ENCODE measurements at regions of chr16 and their contacts with region 1.

Region 1: GRCh38 chr16:2720719-2721633 is 952 bp upstream of the PRSS27 start:
- DNase-seq: peak; percentile 74 to 91 (median 85)
- ATAC-seq: peak; percentile 95
- H3K4me3 ChIP-seq: peak overlapping the region; percentile 37
- H3K4me3 Mint-ChIP-seq: peak overlapping the region; percentile 55 to 82 (median 76)
- H3K27ac ChIP-seq: peak overlapping the region; percentile 74
- H3K27ac Mint-ChIP-seq: peak overlapping the region in 7 of 9 donors; percentile 38 to 90 (median 64)
- H3K4me1 ChIP-seq: no peaks in the 10 kb centered on the region
- H3K4me1 Mint-ChIP-seq: peaks cover 0 to 5% (median 0%) of the 10 kb centered on the region in 7 donors
- H3K27me3 ChIP-seq: no peaks in the 10 kb centered on the region
- H3K27me3 Mint-ChIP-seq: peaks cover 9 to 14% (median 10%) of the 10 kb centered on the region in 5 donors

Region 2: DNA sequence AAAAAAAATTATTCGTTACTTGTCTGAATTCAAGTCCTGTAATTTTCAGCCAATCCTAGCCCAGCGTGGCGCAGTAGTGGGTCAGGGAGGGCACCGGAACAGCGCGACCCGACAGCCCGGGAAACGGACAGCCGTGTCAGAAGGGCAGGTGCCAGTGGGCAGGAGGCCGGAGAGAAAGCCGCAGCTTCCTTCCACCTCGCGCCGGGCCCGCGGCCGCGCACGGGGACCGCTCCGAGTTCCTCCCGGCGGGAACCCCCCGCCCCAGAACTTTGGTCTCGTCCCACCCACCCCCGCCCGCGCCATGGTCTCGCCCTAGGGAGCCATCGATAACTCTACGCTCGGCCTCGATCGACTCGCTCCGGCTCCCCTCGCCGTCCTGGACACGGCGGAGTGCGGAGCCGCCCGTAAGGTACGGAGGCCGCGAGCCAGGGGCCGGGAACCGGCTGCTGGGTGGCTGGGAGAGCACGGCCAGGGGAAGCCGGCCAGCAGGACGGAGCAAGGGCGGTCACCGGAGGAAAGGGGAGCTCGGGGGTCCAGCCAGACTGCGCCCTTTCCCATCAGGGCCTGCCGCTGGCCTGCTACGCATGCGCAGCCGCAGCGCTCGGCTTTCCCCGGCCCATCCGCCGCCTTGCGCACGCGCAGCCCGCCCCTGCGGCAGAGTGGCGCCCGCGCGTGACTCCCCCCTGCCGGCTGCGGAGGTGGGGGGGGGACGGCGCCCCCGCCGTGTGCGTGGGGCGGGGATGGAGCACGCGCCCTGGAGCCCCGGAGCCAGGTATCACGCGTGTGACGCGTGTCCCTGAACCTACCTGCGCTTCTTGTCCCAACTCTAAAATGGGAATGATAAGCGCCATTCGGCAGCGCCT is 515.6 kb before region 1 on chr16 and contains the start of gene MLST8:
- CTCF ChIA-PET with region 1: no interaction called
- POLR2A ChIA-PET with region 1: no interaction called
- intact Hi-C with region 1: loop called in 1 of 2 experiments (anchors 2 kb)
- DNase-seq: peak; percentile 88 to 100 (median 98)
- ATAC-seq: peak; percentile 97
- H3K4me3 ChIP-seq: peak within 1 kb of the TSS; percentile 93
- H3K4me3 Mint-ChIP-seq: peak within 1 kb of the TSS; percentile 80 to 95 (median 88)
- H3K27ac ChIP-seq: peak within 1 kb of the TSS; percentile 97
- H3K27ac Mint-ChIP-seq: peak within 1 kb of the TSS; percentile 70 to 91 (median 86)
- H3K4me1 ChIP-seq: peaks cover 11 to 13% of the 10 kb centered on the region in 2 donors
- H3K4me1 Mint-ChIP-seq: peaks cover 7 to 29% (median 21%) of the 10 kb centered on the region in 7 donors
- H3K27me3 ChIP-seq: no peaks in the 10 kb centered on the region
- H3K27me3 Mint-ChIP-seq: peaks cover 0 to 11% (median 0%) of the 10 kb centered on the region in 5 donors
- total RNA-seq, gene MLST8: 25.1 to 41.2 (median 35.5) TPM

Region 3: DNA sequence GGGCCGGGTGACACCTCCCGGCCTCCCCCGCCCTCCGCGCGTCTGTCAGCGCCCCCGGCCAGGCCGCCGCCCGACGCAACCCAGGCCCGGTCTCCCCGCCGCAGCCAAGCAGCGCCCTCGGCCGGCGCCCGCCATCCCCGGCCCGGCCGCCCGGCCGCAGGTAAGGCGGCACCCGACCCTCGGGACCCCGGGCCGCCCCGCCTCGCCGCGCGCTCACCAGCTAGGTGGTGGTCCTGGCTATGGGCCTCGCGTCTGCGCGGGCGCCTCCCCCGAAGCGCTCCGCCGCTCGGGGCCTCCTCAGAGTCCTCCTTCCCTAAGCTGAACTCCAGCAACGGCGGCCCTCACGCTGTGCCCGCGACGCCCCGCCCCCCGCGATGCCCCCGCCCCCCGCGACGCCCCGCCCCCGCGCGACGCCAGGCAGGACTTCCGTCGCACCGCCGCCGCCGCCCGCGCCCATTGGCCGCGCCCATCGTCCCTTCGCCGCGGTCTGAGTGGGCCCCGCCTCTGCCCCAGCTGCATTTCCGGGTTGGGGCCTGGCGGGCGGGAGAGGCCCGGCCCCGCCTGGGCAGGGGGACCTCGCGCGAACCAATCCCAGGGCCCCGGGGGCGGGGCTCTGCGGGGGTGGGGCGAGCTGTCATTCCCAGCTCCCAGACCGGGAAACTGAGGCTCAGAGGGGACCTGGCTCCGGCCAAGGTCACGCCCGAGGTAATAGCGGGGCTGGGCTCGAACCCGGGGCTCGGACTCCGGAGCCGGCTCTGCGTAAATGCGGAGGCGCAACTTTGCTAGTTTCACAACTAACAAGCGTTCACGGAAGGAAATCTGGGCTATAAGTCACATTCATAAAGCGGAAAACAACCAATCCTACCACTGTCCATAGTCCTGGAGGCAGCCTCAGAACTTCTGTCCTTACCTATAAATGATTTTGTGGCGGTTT is 47.6 kb before region 1 on chr16:
- CTCF ChIA-PET with region 1: no interaction called
- POLR2A ChIA-PET with region 1: no interaction called
- intact Hi-C with region 1: loop called (anchors 1 kb)
- DNase-seq: peak; percentile 89 to 97 (median 96)
- ATAC-seq: peak; percentile 97
- H3K4me3 ChIP-seq: peak overlapping the region; percentile 75
- H3K4me3 Mint-ChIP-seq: peak overlapping the region; percentile 68 to 90 (median 86)
- H3K27ac ChIP-seq: peak overlapping the region; percentile 75
- H3K27ac Mint-ChIP-seq: peak overlapping the region in 8 of 9 donors; percentile 68 to 89 (median 82)
- H3K4me1 ChIP-seq: peaks cover 8 to 9% of the 10 kb centered on the region in 2 donors
- H3K4me1 Mint-ChIP-seq: peaks cover 12 to 45% (median 34%) of the 10 kb centered on the region in 7 donors
- H3K27me3 ChIP-seq: no peaks in the 10 kb centered on the region
- H3K27me3 Mint-ChIP-seq: no peaks in the 10 kb centered on the region

Region 4: GRCh38 chr16:2752035-2752849 is 31.3 kb after region 1 on chr16 and contains the start of gene SRRM2:
- CTCF ChIA-PET with region 1: no interaction called
- POLR2A ChIA-PET with region 1: no interaction called
- intact Hi-C with region 1: loop called (anchors 1 kb)
- DNase-seq: peak; percentile 92 to 98 (median 96)
- ATAC-seq: peak; percentile 92
- H3K4me3 ChIP-seq: peak within 1 kb of the TSS; percentile 68
- H3K4me3 Mint-ChIP-seq: peak within 1 kb of the TSS; percentile 89 to 98 (median 94)
- H3K27ac ChIP-seq: peak within 1 kb of the TSS; percentile 100
- H3K27ac Mint-ChIP-seq: peak within 1 kb of the TSS; percentile 96 to 100 (median 99)
- H3K4me1 ChIP-seq: peaks cover 35 to 40% of the 10 kb centered on the region in 2 donors
- H3K4me1 Mint-ChIP-seq: peaks cover 37 to 57% (median 50%) of the 10 kb centered on the region in 7 donors
- H3K27me3 ChIP-seq: no peaks in the 10 kb centered on the region
- H3K27me3 Mint-ChIP-seq: no peaks in the 10 kb centered on the region
- total RNA-seq, gene SRRM2: 590 to 1,259 (median 1,020) TPM

Region 5: GRCh38 chr16:2770057-2770951 is 49.3 kb after region 1 on chr16:
- CTCF ChIA-PET with region 1: no interaction called
- POLR2A ChIA-PET with region 1: no interaction called
- intact Hi-C with region 1: no loop called
- DNase-seq: peak in 1 of 9 donors; percentile 7
- ATAC-seq: peak; percentile 28
- H3K4me3 ChIP-seq: no peak overlapping the region
- H3K4me3 Mint-ChIP-seq: peak overlapping the region in 1 of 10 donors; percentile 61
- H3K27ac ChIP-seq: no peak overlapping the region
- H3K27ac Mint-ChIP-seq: peak overlapping the region in 4 of 9 donors; percentile 21 to 65 (median 52)
- H3K4me1 ChIP-seq: peaks cover 0 to 1% of the 10 kb centered on the region in 2 donors
- H3K4me1 Mint-ChIP-seq: peaks cover 5 to 40% (median 17%) of the 10 kb centered on the region in 7 donors
- H3K27me3 ChIP-seq: no peaks in the 10 kb centered on the region
- H3K27me3 Mint-ChIP-seq: no peaks in the 10 kb centered on the region

Region 6: GRCh38 chr16:2784951-2785635 is 64.1 kb after region 1 on chr16:
- CTCF ChIA-PET with region 1: no interaction called
- POLR2A ChIA-PET with region 1: no interaction called
- intact Hi-C with region 1: loop called in 1 of 2 experiments (anchors 2 kb)
- DNase-seq: peak in 3 of 9 donors; percentile 40 to 48 (median 45)
- ATAC-seq: peak; percentile 73
- H3K4me3 ChIP-seq: peak overlapping the region; percentile 64
- H3K4me3 Mint-ChIP-seq: peak overlapping the region; percentile 81 to 91 (median 86)
- H3K27ac ChIP-seq: peak overlapping the region; percentile 50
- H3K27ac Mint-ChIP-seq: peak overlapping the region in 5 of 9 donors; percentile 42 to 65 (median 59)
- H3K4me1 ChIP-seq: peaks cover 2 to 8% of the 10 kb centered on the region in 2 donors
- H3K4me1 Mint-ChIP-seq: peaks cover 0 to 15% (median 5%) of the 10 kb centered on the region in 7 donors
- H3K27me3 ChIP-seq: no peaks in the 10 kb centered on the region
- H3K27me3 Mint-ChIP-seq: peaks cover 0 to 23% (median 0%) of the 10 kb centered on the region in 5 donors

Region 7: GRCh38 chr16:3243882-3244281 is 522.9 kb after region 1 on chr16:
- CTCF ChIA-PET with region 1: no interaction called
- POLR2A ChIA-PET with region 1: no interaction called
- intact Hi-C with region 1: no loop called
- DNase-seq: no peak
- ATAC-seq: no peak
- H3K4me3 ChIP-seq: no peak overlapping the region
- H3K4me3 Mint-ChIP-seq: no peak overlapping the region
- H3K27ac ChIP-seq: no peak overlapping the region
- H3K27ac Mint-ChIP-seq: no peak overlapping the region
- H3K4me1 ChIP-seq: no peaks in the 10 kb centered on the region
- H3K4me1 Mint-ChIP-seq: peaks cover 0 to 5% (median 0%) of the 10 kb centered on the region in 7 donors
- H3K27me3 ChIP-seq: no peaks in the 10 kb centered on the region
- H3K27me3 Mint-ChIP-seq: peaks cover 0 to 17% (median 11%) of the 10 kb centered on the region in 5 donors